Activated CD4-positive, alpha-beta T cell treated with anti-CD3 and anti-CD28 coated beads for 36 hours (primary cell): ENCODE measurements at regions of chr9 and their contacts with region 1.

Region 1: GRCh38 chr9:71986900-71987299 is 73.5 kb downstream of the C9orf57 start:
- DNase-seq: no peak
- ATAC-seq: no peak
- H3K4me3 Mint-ChIP-seq: no peak overlapping the region
- H3K27ac Mint-ChIP-seq: no peak overlapping the region
- H3K4me1 Mint-ChIP-seq: no peaks in the 10 kb centered on the region
- H3K27me3 Mint-ChIP-seq: no peaks in the 10 kb centered on the region

Region 2: DNA sequence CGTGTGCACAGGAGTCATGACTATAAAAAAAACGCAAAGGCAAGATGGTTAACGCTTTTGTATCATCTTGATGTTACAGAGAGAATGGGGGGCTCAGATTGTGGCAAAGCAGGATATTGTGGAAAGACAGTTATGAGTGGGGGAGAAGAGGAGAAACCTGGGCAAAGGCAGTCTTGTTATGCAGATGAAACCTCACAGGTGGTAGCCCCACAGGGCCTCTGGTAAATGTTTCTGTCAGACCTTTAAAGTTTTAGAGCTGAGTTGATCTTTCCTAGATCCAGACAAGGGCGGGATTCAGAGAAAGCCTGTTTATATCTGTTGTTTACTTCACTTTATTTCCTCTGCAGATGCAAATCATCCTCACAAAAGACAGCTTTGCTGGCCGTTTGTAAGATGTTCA is 20.3 kb before region 1 on chr9:
- CTCF ChIA-PET with region 1: no interaction called
- POLR2A ChIA-PET with region 1: no interaction called
- intact Hi-C with region 1: loop called in 1 of 2 experiments (anchors 1 kb)
- DNase-seq: no peak
- ATAC-seq: no peak
- H3K4me3 Mint-ChIP-seq: no peak overlapping the region
- H3K27ac Mint-ChIP-seq: no peak overlapping the region
- H3K4me1 Mint-ChIP-seq: no peaks in the 10 kb centered on the region
- H3K27me3 Mint-ChIP-seq: no peaks in the 10 kb centered on the region